ENCODE measurements at regions of chr17 and their contacts with region 1.

Region 1: GRCh38 chr17:17001874-17002520 is 30.1 kb upstream of the TNFRSF13B start:
- DNase-seq: peak; percentile 83 to 90
- H3K4me3 ChIP-seq: no peak overlapping the region
- H3K4me3 Mint-ChIP-seq: no peak overlapping the region
- H3K27ac Mint-ChIP-seq: peak overlapping the region; percentile 35
- H3K4me1 ChIP-seq: peaks cover 3% of the 10 kb centered on the region; the same call in 1 of the 2 replicates
- H3K4me1 Mint-ChIP-seq: peaks cover 13% of the 10 kb centered on the region
- H3K27me3 ChIP-seq: no peaks in the 10 kb centered on the region; the same call in 1 of the 2 replicates
- H3K27me3 Mint-ChIP-seq: no peaks in the 10 kb centered on the region
- CTCF ChIP-seq: peak; percentile 95 to 98

Region 2: DNA sequence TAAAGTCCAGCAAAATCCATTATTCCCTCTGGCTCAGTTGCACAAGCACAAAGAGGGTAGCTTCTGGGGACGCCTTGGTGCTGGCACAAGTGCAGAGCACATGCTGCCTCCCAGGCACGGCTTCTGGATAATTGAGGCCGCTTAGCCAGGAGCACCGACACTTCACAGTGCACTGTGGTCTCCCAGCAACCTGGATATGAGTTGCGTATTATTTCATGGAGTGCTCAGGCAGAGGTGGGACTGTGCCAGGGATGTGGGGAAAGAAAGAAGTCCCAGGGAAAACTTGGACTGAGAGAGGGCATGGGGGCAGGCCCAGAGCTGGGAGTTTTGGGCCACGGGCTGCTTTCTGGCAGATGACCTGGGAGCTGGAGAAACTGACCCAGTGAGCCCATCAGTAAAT is 77.8 kb after region 1 on chr17:
- CTCF ChIA-PET with region 1: no interaction called
- POLR2A ChIA-PET with region 1: no interaction called
- intact Hi-C with region 1: loop called (anchors 2 kb)
- DNase-seq: no peak
- H3K4me3 ChIP-seq: no peak overlapping the region
- H3K4me3 Mint-ChIP-seq: no peak overlapping the region
- H3K27ac Mint-ChIP-seq: peak overlapping the region; percentile 74
- H3K4me1 ChIP-seq: peaks cover 40% of the 10 kb centered on the region
- H3K4me1 Mint-ChIP-seq: peaks cover 48% of the 10 kb centered on the region
- H3K27me3 ChIP-seq: no peaks in the 10 kb centered on the region
- H3K27me3 Mint-ChIP-seq: no peaks in the 10 kb centered on the region
- CTCF ChIP-seq: no peak

Region 3: DNA sequence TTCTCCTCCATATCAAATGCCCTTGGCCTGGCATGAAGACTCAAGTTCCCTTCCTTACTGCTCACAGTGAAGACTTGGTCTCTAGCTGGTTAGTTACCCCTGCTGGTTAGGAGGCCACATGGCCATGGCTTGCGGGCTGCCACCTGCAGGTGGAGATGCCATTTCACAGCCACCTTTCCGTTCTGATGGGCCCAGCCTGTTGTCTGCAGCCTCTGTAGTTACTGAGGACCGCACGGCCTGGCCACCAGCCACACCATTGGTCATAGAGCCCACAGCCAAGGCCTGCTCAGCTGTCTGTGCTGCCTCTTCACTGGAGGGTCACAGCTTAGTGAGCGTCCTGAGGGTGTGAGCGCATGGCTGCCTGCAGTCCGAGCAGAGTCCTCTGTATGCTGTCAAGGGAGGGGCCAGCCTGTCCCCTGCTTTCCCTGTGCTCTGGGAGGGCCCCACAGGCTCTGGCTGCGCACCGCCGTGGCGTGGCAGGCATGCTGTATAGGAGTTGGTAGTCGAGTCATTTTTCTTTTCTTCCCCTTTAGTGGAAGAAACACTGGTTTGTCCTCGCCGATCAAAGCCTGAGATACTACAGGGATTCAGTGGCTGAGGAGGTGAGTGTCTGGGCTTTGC is 144.9 kb after region 1 on chr17:
- CTCF ChIA-PET with region 1: interaction called, 3 read pairs
- POLR2A ChIA-PET with region 1: no interaction called
- intact Hi-C with region 1: loop called (anchors 1 kb)
- DNase-seq: peak; percentile 57 to 67
- H3K4me3 ChIP-seq: no peak overlapping the region
- H3K4me3 Mint-ChIP-seq: no peak overlapping the region
- H3K27ac Mint-ChIP-seq: no peak overlapping the region
- H3K4me1 ChIP-seq: no peaks in the 10 kb centered on the region
- H3K4me1 Mint-ChIP-seq: no peaks in the 10 kb centered on the region
- H3K27me3 ChIP-seq: no peaks in the 10 kb centered on the region
- H3K27me3 Mint-ChIP-seq: no peaks in the 10 kb centered on the region
- CTCF ChIP-seq: peak; percentile 61 to 75

Region 4: GRCh38 chr17:17206124-17206912 is 204.3 kb after region 1 on chr17 and contains the start of gene PLD6:
- CTCF ChIA-PET with region 1: no interaction called
- POLR2A ChIA-PET with region 1: no interaction called
- intact Hi-C with region 1: loop called (anchors 5 kb)
- DNase-seq: peak; percentile 96
- H3K4me3 ChIP-seq: peak within 1 kb of the TSS; percentile 79
- H3K4me3 Mint-ChIP-seq: peak within 1 kb of the TSS; percentile 81
- H3K27ac Mint-ChIP-seq: peak within 1 kb of the TSS; percentile 83
- H3K4me1 ChIP-seq: peaks cover 7% of the 10 kb centered on the region; the same call in 1 of the 2 replicates
- H3K4me1 Mint-ChIP-seq: peaks cover 5% of the 10 kb centered on the region
- H3K27me3 ChIP-seq: no peaks in the 10 kb centered on the region
- H3K27me3 Mint-ChIP-seq: no peaks in the 10 kb centered on the region
- CTCF ChIP-seq: no peak
- total RNA-seq, gene PLD6: 7.1 and 8.0 TPM in 2 replicates

Measured in Caco-2 (cell line).